ENCODE measurements at regions of chrX and their contacts with region 1.

Region 1: GRCh38 chrX:10579112-10580011 is 41.0 kb downstream of the MID1 start:
- DNase-seq: peak; percentile 39
- H3K4me3 Mint-ChIP-seq: peak overlapping the region; percentile 64
- H3K27ac Mint-ChIP-seq: peak overlapping the region; percentile 99
- H3K4me1 Mint-ChIP-seq: peaks cover 60% of the 10 kb centered on the region
- H3K27me3 Mint-ChIP-seq: no peaks in the 10 kb centered on the region
- CTCF ChIP-seq: no peak

Region 2: GRCh38 chrX:10156199-10157031 is 422.9 kb before region 1 on chrX and contains the start of gene CLCN4:
- CTCF ChIA-PET with region 1: interaction called, 10 read pairs
- intact Hi-C with region 1: no loop called
- DNase-seq: peak; percentile 84
- H3K4me3 Mint-ChIP-seq: peak within 1 kb of the TSS; percentile 75
- H3K27ac Mint-ChIP-seq: peak within 1 kb of the TSS; percentile 82
- H3K4me1 Mint-ChIP-seq: peaks cover 20% of the 10 kb centered on the region
- H3K27me3 Mint-ChIP-seq: no peaks in the 10 kb centered on the region
- CTCF ChIP-seq: no peak
- total RNA-seq, gene CLCN4: 9.9 and 13.3 TPM in 2 replicates

Region 3: DNA sequence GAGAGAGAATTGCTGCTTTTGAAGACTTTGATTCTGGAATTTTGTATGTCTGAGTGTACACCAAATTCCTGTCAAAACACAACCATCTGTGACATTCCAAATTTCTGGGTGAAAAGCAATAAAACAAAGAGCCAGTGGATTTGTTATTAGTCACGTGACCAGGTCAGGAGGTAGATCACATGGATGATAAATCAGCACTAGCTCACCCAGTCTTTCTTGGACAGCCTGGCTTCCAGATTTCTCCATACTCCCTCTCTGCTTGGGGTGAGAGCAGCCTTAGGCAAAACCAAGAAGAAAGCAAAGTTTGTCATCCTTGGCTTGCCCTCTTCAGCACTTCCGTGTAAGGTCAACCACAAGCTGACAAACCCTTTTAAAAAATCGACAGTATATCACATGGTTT is 228.4 kb before region 1 on chrX:
- CTCF ChIA-PET with region 1: no interaction called
- intact Hi-C with region 1: no loop called
- DNase-seq: peak; percentile 22
- H3K4me3 Mint-ChIP-seq: peak overlapping the region; percentile 24
- H3K27ac Mint-ChIP-seq: peak overlapping the region; percentile 76
- H3K4me1 Mint-ChIP-seq: peaks cover 24% of the 10 kb centered on the region
- H3K27me3 Mint-ChIP-seq: no peaks in the 10 kb centered on the region
- CTCF ChIP-seq: no peak

Region 4: DNA sequence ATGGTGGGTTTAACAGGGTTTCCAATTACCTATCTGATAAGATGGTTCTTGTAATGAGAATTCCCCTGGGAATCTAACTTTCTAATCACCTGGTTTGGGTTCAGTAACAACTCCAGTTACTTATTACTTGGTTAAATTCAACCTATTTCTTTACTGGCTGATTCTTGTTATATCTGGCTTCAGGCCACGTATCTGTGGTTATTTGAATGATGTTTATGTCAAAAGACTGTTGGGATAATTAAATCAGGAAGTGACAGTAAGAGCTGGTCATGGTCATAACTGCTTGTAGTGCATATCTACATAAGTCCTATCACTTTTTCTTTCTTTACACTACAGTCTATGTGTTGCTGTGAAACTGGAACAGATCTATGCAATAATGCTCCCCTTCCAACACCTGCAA is 67.1 kb before region 1 on chrX:
- CTCF ChIA-PET with region 1: no interaction called
- intact Hi-C with region 1: loop called (anchors 5 kb)
- DNase-seq: peak; percentile 23
- H3K4me3 Mint-ChIP-seq: no peak overlapping the region
- H3K27ac Mint-ChIP-seq: no peak overlapping the region
- H3K4me1 Mint-ChIP-seq: peaks cover 36% of the 10 kb centered on the region
- H3K27me3 Mint-ChIP-seq: no peaks in the 10 kb centered on the region
- CTCF ChIP-seq: no peak

Measured in Calu3 (cell line).